GM12878 (cell line): ENCODE measurements at regions of chr3 and their contacts with region 1.

Region 1: GRCh38 chr3:31132132-31132769 is 237.8 kb upstream of the GADL1 start:
- DNase-seq: peak; percentile 21
- ATAC-seq: peak; percentile 78
- H3K4me3 ChIP-seq: no peak overlapping the region
- H3K27ac ChIP-seq: no peak overlapping the region
- H3K4me1 ChIP-seq: no peaks in the 10 kb centered on the region
- H3K27me3 ChIP-seq: no peaks in the 10 kb centered on the region
- CTCF ChIP-seq: peak; percentile 28 to 50 (median 39); a peak in 4 of 6 replicates
- EP300 ChIP-seq: no peak
- POLR2A ChIP-seq: no peak
- RAD21 ChIP-seq: peak; percentile 86

Region 2: GRCh38 chr3:30768703-30769685 is 363.3 kb before region 1 on chr3:
- CTCF ChIA-PET with region 1: interaction called, 21 read pairs
- POLR2A ChIA-PET with region 1: no interaction called
- RAD21 ChIA-PET with region 1: interaction called, 5 read pairs
- SMC1A ChIA-PET with region 1: interaction called, 16 read pairs
- in situ Hi-C with region 1: loop called (anchors 5 kb)
- intact Hi-C with region 1: loop called (anchors 1 kb)
- DNase-seq: no peak
- ATAC-seq: peak; percentile 75
- H3K4me3 ChIP-seq: no peak overlapping the region
- H3K27ac ChIP-seq: no peak overlapping the region
- H3K4me1 ChIP-seq: no peaks in the 10 kb centered on the region
- H3K27me3 ChIP-seq: no peaks in the 10 kb centered on the region; a peak in 2 of 4 replicates
- CTCF ChIP-seq: peak; percentile 77
- EP300 ChIP-seq: no peak
- POLR2A ChIP-seq: no peak
- RAD21 ChIP-seq: peak; percentile 82

Region 3: DNA sequence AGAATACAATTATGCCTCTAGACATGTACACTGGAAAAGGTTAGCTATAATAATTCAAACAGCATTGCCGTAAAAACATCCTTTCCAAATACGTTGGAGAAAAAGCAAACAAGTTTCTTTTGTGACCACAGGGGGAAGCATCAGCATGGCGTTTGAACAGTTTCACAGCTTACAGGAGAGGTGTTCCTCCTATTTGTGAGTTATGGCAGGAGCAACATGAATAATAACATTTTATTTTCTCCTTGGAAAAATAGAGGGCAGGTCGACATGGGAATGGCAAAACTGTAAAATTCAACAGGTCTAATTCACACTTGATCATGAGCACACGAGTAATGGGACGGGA is 198.1 kb before region 1 on chr3:
- CTCF ChIA-PET with region 1: interaction called, 14 read pairs
- POLR2A ChIA-PET with region 1: no interaction called
- RAD21 ChIA-PET with region 1: interaction called, 8 read pairs
- SMC1A ChIA-PET with region 1: interaction called, 9 read pairs
- in situ Hi-C with region 1: no loop called
- intact Hi-C with region 1: loop called (anchors 5 kb)
- DNase-seq: no peak
- ATAC-seq: peak; percentile 72
- H3K4me3 ChIP-seq: no peak overlapping the region
- H3K27ac ChIP-seq: no peak overlapping the region
- H3K4me1 ChIP-seq: no peaks in the 10 kb centered on the region
- H3K27me3 ChIP-seq: no peaks in the 10 kb centered on the region
- CTCF ChIP-seq: peak; percentile 35 to 54 (median 35); a peak in 4 of 6 replicates
- EP300 ChIP-seq: no peak
- POLR2A ChIP-seq: no peak
- RAD21 ChIP-seq: peak; percentile 74

Region 4: DNA sequence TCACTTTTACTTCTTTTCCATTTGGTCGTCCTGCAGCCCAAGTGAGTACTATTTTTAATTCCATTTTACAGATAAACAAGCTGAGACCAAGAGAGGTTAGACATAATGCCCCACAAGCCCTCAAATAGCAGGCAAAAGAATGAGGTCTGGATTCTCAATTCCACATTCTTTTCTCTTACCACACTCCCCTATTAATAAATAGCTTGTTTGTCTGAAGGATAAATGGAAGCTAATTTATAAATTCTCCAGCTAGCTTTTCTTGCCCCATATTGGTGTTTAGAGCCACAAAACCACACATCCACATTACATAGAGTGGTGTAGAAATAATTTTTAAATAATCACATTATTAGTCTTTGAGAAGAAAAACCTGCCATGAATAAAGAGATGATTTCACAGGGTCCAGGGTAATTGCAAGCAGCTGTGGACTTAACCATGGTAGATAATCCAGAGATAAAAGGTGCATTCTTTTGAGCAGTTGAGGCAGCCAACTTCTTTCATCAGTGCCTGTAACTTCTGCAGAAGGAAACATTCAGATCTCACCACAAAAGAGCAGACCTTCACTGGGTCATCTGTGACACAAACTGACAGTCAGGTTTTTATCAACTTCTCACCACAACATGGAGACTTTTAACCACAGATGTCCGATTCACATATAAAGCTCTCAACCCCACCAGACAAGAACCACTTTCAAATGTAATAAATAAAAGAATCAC is 87.0 kb after region 1 on chr3:
- CTCF ChIA-PET with region 1: interaction called, 3 read pairs
- POLR2A ChIA-PET with region 1: no interaction called
- RAD21 ChIA-PET with region 1: no interaction called
- SMC1A ChIA-PET with region 1: interaction called, 15 read pairs
- in situ Hi-C with region 1: no loop called
- intact Hi-C with region 1: no loop called
- DNase-seq: peak; percentile 84
- ATAC-seq: peak; percentile 84
- H3K4me3 ChIP-seq: no peak overlapping the region
- H3K27ac ChIP-seq: peak overlapping the region; percentile 51
- H3K4me1 ChIP-seq: peaks cover 28% of the 10 kb centered on the region
- H3K27me3 ChIP-seq: no peaks in the 10 kb centered on the region
- CTCF ChIP-seq: no peak
- EP300 ChIP-seq: peak; percentile 57 to 86; a peak in 3 of 4 replicates
- POLR2A ChIP-seq: no peak
- RAD21 ChIP-seq: peak; percentile 30

Region 5: GRCh38 chr3:31369637-31370379 is 237.6 kb after region 1 on chr3:
- CTCF ChIA-PET with region 1: no interaction called
- POLR2A ChIA-PET with region 1: no interaction called
- RAD21 ChIA-PET with region 1: no interaction called
- SMC1A ChIA-PET with region 1: no interaction called
- in situ Hi-C with region 1: no loop called
- intact Hi-C with region 1: no loop called
- DNase-seq: no peak
- ATAC-seq: no peak
- H3K4me3 ChIP-seq: no peak overlapping the region
- H3K27ac ChIP-seq: no peak overlapping the region
- H3K4me1 ChIP-seq: no peaks in the 10 kb centered on the region
- H3K27me3 ChIP-seq: no peaks in the 10 kb centered on the region
- CTCF ChIP-seq: no peak
- EP300 ChIP-seq: no peak
- POLR2A ChIP-seq: no peak
- RAD21 ChIP-seq: no peak

Region 6: GRCh38 chr3:31622636-31623288 is 490.5 kb after region 1 on chr3:
- CTCF ChIA-PET with region 1: no interaction called
- POLR2A ChIA-PET with region 1: no interaction called
- RAD21 ChIA-PET with region 1: no interaction called
- SMC1A ChIA-PET with region 1: no interaction called
- in situ Hi-C with region 1: no loop called
- intact Hi-C with region 1: no loop called
- DNase-seq: peak; percentile 41
- ATAC-seq: peak; percentile 80
- H3K4me3 ChIP-seq: no peak overlapping the region
- H3K27ac ChIP-seq: peak overlapping the region; percentile 0; the same call in 1 of the 2 replicates
- H3K4me1 ChIP-seq: peaks cover 25% of the 10 kb centered on the region
- H3K27me3 ChIP-seq: no peaks in the 10 kb centered on the region
- CTCF ChIP-seq: no peak
- EP300 ChIP-seq: peak; percentile 84 to 85
- POLR2A ChIP-seq: no peak
- RAD21 ChIP-seq: no peak

Region 7: DNA sequence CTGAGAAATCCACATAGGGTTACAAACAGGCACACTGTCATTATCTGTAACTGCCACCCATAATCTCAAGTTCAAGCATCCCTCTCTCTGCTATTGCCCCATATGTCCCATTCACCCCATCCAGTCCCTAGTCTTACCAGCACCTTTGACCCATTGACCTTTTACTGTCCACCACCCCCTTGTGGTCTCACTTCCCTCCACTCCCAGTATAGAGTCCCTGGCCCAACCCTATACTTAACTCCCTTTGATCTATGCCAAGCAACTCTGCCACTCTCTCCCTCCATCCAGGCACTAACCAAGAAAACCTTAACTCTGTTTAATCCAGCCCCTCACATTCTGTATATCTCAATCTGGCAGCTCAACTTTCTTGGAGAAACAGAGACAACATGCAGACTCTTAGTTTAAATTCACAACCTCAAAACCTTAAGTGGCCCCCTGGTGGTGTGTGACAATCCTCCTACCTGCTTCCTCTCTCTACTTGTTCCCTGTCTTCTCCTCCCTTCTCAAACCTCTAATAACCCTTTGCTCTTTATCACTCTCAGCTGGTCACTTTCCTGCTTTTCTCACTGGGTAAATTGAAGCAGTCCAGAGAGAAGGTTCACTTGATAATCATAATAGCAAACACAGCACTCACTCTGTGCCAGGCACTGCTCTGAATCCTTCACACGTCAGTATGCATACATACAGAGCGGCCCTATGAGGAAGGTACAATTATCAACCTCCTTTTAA is 563.2 kb after region 1 on chr3:
- CTCF ChIA-PET with region 1: no interaction called
- POLR2A ChIA-PET with region 1: no interaction called
- RAD21 ChIA-PET with region 1: no interaction called
- SMC1A ChIA-PET with region 1: no interaction called
- in situ Hi-C with region 1: no loop called
- intact Hi-C with region 1: loop called (anchors 5 kb)
- DNase-seq: no peak
- ATAC-seq: peak; percentile 82
- H3K4me3 ChIP-seq: no peak overlapping the region
- H3K27ac ChIP-seq: no peak overlapping the region
- H3K4me1 ChIP-seq: no peaks in the 10 kb centered on the region
- H3K27me3 ChIP-seq: no peaks in the 10 kb centered on the region
- CTCF ChIP-seq: peak; percentile 41 to 56 (median 50); a peak in 5 of 6 replicates
- EP300 ChIP-seq: no peak
- POLR2A ChIP-seq: no peak
- RAD21 ChIP-seq: peak; percentile 39